Vagina (tissue), 2 donors: ENCODE measurements at regions of chr2 and their contacts with region 1.

Region 1: DNA sequence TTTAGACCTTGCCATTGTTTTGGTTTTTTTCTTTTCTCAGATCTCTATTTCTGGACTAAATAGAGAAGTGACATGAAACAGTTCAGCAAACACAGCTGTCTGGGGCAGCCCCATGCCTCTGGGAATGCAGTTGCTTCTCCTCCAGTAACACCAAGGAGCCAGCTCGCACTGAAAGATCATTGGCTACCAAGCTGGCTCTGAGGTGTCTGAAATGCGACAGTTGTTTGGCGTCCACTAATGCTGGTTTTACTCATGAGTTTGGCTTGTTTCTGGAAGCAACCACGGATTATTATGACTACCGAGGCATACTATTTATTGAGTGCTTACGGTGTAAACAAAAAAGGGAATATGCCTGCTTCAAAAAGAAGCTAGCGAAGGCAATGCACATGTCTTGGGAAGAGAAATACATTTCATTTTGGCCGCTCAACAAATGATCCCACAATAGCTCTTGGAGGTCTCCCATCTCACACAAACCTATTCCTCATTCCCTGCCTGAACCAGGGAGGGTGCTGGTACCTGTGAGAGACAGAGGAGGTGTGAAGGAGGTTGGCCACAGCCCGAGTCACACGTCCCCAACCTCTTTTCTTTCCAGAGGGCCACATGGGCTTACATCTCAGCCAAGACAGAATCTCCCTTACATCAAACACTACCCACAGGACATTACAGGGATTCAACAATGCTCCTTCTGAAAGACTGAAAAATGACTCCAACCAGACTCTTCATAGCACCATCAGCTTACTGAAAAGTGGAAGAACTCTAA is 37.5 kb upstream of the NEB start:
- DNase-seq: no peak
- H3K4me3 ChIP-seq: no peak overlapping the region
- H3K27ac ChIP-seq: no peak overlapping the region
- H3K4me1 ChIP-seq: peaks cover 10% of the 10 kb centered on the region
- H3K27me3 ChIP-seq: no peaks in the 10 kb centered on the region
- CTCF ChIP-seq: no peak
- POLR2A ChIP-seq: no peak

Region 2: DNA sequence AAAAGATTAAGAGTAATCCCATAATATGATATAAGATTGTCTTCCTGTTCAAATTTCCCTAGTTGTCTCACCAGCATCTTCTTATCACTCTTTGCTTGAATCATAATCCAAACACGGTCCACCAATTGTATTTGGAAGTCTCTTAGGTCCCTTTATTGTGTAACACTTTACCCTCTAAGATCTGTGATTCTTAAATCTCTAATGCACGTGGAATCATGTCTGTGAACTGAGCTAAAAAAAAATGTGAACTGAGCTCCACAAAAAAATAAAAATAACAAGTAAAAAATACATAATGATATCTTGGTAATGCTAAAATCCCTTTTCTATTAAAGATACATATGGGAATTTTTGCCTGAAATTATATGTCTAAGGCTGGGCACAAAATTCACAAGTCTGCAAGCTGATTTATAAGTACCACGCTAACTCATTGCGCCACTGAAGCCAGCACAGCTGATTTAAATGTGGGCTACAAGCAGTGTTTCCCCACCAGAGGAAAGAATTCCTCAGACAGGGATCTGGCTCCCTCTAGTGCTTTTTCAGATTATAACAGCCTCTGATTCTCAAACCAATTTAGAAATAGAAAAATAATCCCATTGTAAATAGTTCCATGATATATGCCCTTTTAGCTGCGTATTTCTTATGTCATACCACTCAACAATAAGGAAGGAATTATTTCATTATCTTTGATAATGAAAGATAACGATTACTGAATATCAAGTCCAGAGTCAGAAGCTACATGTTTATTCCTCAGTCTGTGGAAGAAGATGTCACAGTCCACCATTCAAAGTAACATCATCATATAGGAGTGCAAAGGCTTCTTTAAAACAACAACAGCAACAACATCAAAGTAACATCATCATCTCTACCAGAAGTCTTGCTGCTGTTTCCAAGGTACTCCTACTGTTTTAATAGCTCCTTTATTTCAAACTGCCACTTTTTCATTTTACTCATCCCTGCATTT is 533.0 kb before region 1 on chr2:
- intact Hi-C with region 1: no loop called
- DNase-seq: no peak
- H3K4me3 ChIP-seq: no peak overlapping the region
- H3K27ac ChIP-seq: no peak overlapping the region
- H3K4me1 ChIP-seq: no peaks in the 10 kb centered on the region
- H3K27me3 ChIP-seq: no peaks in the 10 kb centered on the region
- CTCF ChIP-seq: peak; percentile 56 to 89 (median 57)
- POLR2A ChIP-seq: no peak

Region 3: DNA sequence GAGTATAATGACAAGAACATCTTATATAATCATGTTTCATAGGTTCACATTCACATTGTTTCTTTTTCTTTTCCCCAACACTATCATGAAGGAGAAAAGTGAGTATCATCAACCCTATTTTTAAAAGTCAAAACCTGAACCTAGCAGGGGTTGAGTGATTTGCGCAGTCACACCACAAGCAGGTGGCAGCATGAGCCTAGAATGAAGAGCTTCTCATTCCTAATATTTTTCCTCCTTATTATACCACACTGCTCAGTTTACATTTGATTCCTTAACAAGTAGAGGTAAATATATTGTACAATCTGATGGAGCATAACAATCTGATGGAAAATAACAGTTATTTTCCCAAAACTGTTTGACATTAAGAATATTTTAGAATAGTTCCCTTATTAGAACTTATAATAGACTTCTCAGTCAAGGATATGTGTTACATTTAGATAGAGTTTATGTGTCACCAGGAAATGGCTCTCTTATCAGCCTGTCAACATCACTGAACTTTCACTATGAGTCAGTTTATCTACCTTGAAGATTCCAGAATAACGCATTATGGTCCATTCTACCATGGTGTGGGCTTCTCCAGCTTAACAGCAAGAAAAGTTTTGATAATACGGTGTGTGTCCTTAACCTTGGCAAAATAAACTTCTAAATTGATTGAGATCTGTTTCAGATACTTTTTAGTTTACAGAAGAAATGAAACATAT is 157.0 kb before region 1 on chr2:
- intact Hi-C with region 1: no loop called
- DNase-seq: no peak
- H3K4me3 ChIP-seq: no peak overlapping the region
- H3K27ac ChIP-seq: no peak overlapping the region
- H3K4me1 ChIP-seq: peaks cover 10% of the 10 kb centered on the region
- H3K27me3 ChIP-seq: no peaks in the 10 kb centered on the region
- CTCF ChIP-seq: no peak
- POLR2A ChIP-seq: no peak

Region 4: DNA sequence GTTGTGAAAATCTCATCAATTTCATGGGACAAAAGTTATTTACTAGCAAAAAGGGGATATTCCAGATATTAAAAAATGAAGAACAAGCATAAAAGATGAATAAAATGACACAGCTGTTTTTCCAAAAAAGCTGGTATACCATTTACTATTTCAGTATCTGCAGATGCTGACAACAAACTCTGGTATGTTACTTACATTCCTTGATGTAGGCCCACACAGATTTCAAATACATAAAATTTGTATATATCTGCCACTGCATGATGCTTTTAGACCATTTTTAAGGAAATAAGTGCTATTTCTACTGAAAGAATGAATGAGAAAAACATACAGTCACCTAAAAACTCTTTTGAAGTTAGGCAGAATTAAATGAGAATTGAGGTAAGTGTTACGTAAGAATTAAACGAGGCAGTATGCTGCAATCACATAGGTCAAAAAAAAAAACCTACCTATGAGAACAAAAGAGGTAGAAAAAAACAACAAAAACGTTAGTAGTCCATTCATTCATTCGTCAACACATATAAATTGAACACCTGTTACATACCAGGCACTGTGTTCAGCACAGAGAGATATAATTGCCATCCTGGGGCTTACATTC is 24.0 kb after region 1 on chr2:
- intact Hi-C with region 1: loop called (anchors 1 kb)
- DNase-seq: no peak
- H3K4me3 ChIP-seq: no peak overlapping the region
- H3K27ac ChIP-seq: no peak overlapping the region
- H3K4me1 ChIP-seq: no peaks in the 10 kb centered on the region
- H3K27me3 ChIP-seq: no peaks in the 10 kb centered on the region
- CTCF ChIP-seq: no peak
- POLR2A ChIP-seq: no peak